Activated CD8-positive, alpha-beta memory T cell treated with anti-CD3 and anti-CD28 coated beads, Interleukin-2, amount 10 ng/mL, durations not matched to agents 7 days and 5 days (primary cell): ENCODE measurements at regions of chr9 and their contacts with region 1.

Region 1: GRCh38 chr9:137286975-137287383 is 9.5 kb downstream of the TOR4A start:
- DNase-seq: no peak
- ATAC-seq: peak; percentile 67
- H3K4me3 Mint-ChIP-seq: no peak overlapping the region
- H3K27ac Mint-ChIP-seq: no peak overlapping the region
- H3K4me1 Mint-ChIP-seq: peaks cover 3% of the 10 kb centered on the region
- H3K27me3 Mint-ChIP-seq: peaks cover 10% of the 10 kb centered on the region

Region 2: DNA sequence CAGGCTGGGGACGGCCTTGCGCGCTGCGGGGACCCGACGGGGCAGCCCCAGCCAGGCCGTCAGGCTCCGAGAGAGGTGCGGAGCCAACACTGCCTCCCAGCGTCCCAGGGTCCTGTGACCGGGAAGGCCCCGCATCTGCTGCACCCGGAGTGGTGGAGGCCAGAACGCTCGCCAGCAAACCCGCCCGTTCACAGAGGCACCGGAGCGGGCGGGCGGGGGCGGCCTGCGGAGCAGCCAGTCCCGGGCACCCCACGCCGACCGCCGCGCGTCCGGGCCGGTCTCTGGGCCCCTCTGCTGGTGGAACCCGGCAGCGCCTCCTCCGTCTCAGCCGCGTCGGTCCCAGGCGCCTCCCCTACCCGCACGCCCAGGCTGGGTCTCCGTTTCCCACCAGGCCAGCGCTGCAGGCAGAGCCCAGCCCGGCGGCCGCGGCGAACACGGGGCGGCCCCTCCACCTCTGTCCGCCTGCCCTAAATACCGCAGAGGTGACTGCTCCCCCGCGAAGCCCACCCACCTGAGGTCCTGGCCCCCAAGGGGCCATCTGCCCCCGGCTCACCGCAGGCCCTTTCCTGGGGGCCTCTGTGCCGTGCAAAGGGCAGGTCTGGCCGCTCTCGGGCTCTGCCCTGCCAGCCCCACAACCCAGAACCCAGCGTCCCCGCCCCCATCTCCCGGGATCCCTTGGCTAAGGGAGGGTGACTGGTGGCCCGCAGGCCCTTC is 120.1 kb after region 1 on chr9:
- CTCF ChIA-PET with region 1: interaction called, 10 read pairs
- DNase-seq: peak; percentile 71
- ATAC-seq: peak; percentile 92
- H3K4me3 Mint-ChIP-seq: no peak overlapping the region
- H3K27ac Mint-ChIP-seq: no peak overlapping the region
- H3K4me1 Mint-ChIP-seq: peaks cover 11% of the 10 kb centered on the region
- H3K27me3 Mint-ChIP-seq: peaks cover 8% of the 10 kb centered on the region